BJ (cell line): ENCODE measurements at regions of chr17 and their contacts with region 1.

Region 1: DNA sequence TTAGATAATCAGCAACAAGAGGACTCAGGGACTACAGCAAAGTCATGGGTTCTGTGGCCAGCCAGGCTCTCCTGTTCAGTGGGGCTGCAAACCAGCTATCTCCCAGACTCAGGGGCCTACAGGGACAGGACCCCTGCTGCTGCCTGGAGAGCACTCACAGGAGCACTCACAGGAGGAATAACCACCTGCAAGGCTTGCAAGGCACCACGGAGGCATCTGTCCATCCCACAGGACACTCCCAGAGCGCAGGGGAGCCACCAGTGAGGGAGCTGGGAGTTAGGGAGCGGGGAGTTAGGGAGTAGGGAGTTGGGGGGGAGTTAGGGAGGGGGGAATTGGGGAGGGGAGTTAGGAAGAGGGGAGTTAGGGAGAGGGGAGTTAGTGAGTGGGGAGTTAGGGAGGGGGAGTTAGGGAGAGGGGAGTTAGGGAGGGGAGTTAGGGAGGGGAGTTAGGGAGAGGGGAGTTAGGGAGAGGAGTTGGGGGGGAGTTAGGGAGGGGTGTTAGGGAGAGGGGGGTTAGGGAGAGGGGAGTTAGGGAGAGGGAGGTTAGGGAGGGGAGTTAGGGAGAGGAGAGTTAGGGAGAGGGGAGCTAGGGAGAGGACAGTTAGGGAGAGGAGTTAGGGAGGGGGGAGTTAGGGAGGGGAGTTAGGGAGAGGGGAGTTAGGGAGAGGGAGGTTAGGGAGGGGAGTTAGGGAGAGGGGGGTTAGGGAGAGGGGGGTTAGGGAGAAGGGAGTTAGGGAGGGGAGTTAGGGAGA is 5.7 kb downstream of the CANT1 start:
- DNase-seq: no peak
- H3K4me3 ChIP-seq: no peak overlapping the region
- H3K27me3 ChIP-seq: no peaks in the 10 kb centered on the region
- CTCF ChIP-seq: no peak

Region 2: DNA sequence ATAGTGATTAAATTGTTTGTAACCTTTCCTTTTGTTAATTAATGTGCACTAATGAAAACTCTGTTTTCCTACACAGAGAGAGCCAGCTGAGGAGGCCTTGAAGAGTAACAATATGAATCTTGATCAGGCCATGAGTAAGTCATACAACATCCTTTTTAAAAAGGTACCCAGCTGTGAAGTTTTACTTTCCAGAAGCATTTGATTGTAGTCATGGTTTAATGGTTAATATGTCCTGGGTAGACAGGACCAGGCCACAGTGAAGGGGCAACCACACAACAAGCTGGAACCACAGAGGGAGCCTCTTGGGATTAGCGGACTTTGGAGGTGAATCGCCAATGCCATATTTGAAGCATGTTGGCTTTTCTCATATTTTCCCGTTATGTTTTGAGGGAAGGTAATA is 930.9 kb before region 1 on chr17:
- CTCF ChIA-PET with region 1: no interaction called
- POLR2A ChIA-PET with region 1: no interaction called
- DNase-seq: no peak
- H3K4me3 ChIP-seq: no peak overlapping the region
- H3K27me3 ChIP-seq: no peaks in the 10 kb centered on the region
- CTCF ChIP-seq: no peak

Region 3: GRCh38 chr17:78986048-78986648 is 17.7 kb before region 1 on chr17:
- CTCF ChIA-PET with region 1: no interaction called
- POLR2A ChIA-PET with region 1: interaction called, 11 read pairs
- DNase-seq: no peak
- H3K4me3 ChIP-seq: no peak overlapping the region; the same call in 1 of the 2 replicates
- H3K27me3 ChIP-seq: no peaks in the 10 kb centered on the region
- CTCF ChIP-seq: peak; percentile 25; the same call in 1 of the 2 replicates